ENCODE measurements at regions of chr1 and their contacts with region 1.

Region 1: DNA sequence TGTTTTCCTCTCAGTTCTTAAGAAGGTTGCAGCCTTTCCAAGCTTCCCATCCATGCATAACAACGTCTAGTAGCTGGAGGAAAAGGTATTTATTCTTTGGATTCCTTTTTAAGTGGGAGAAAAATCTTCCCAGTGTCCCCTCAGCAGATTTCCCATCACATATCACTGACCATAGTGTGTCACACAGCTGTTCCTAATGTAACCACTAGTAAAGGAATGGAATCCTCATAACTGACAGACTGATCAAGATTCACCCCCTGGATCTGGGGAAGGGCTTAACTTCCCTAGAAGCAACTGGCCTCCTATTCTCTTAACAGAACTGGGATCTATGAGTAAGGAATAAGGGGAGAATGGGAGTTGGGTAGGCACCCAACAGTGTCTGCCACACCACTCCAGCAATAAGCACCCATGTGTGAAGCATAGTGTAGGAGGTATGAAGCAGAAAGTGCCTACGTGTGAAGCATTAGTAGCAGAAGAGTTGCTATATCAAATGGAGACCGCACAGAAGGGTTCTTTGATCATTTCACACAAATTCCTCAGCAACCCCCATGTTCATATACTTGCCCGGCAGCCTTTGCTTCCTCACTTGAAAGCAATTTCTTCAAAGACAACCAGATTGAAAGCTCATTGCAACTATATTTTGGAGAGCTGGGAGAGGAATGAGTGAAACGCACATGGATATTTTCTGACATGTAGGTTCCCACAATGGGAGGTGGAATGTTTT is 28.2 kb upstream of the DNAH14 start:
- H3K4me3 ChIP-seq: no peak overlapping the region
- H3K27ac ChIP-seq: no peak overlapping the region
- H3K4me1 ChIP-seq: no peaks in the 10 kb centered on the region
- CTCF ChIP-seq: no peak

Region 2: GRCh38 chr1:224922404-224923164 is 21.3 kb after region 1 on chr1:
- CTCF ChIA-PET with region 1: interaction called, 23 read pairs
- POLR2A ChIA-PET with region 1: no interaction called
- H3K4me3 ChIP-seq: no peak overlapping the region
- H3K27ac ChIP-seq: no peak overlapping the region
- H3K4me1 ChIP-seq: no peaks in the 10 kb centered on the region
- CTCF ChIP-seq: peak; percentile 87

Measured in HEK293 (cell line).